Breast epithelium (tissue), 4 donors: ENCODE measurements at regions of chr2 and their contacts with region 1.

Region 1: DNA sequence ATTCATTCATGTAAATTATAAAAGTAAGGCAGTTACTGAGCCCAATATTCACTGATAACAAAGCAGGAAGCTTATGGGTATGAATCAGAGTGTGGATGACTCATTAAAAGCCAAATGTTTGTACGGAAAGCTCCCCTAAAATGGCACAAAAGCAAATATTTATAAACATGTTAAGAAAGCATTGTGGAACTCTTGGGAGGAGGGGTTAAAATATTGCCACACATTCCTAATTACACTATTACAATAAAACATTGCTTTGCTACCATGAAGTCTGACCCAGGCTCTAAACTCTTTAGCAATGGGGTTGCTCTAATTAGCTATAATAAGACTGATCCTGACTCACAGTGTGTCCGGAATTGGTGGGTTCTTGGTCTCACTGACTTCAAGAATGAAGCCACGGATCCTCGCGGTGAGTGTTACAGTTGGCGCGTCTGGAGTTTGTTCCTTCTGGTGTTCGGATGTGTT is 110.9 kb downstream of the NAB1 start:
- DNase-seq: no peak
- H3K4me3 ChIP-seq: no peak overlapping the region
- H3K27ac ChIP-seq: no peak overlapping the region
- H3K4me1 ChIP-seq: no peaks in the 10 kb centered on the region
- H3K27me3 ChIP-seq: no peaks in the 10 kb centered on the region
- CTCF ChIP-seq: no peak
- POLR2A ChIP-seq: no peak

Region 2: GRCh38 chr2:190511104-190511503 is 248.7 kb before region 1 on chr2:
- intact Hi-C with region 1: loop called (anchors 5 kb)
- DNase-seq: no peak
- H3K4me3 ChIP-seq: no peak overlapping the region
- H3K27ac ChIP-seq: no peak overlapping the region
- H3K4me1 ChIP-seq: peaks cover 0 to 11% of the 10 kb centered on the region in 2 donors
- H3K27me3 ChIP-seq: no peaks in the 10 kb centered on the region
- CTCF ChIP-seq: peak in 2 of 3 donors; percentile 43 to 55
- POLR2A ChIP-seq: no peak

Region 3: GRCh38 chr2:191666732-191667131 is 907.0 kb after region 1 on chr2:
- intact Hi-C with region 1: loop called (anchors 5 kb)
- DNase-seq: no peak
- H3K4me3 ChIP-seq: no peak overlapping the region
- H3K27ac ChIP-seq: no peak overlapping the region
- H3K4me1 ChIP-seq: no peaks in the 10 kb centered on the region
- H3K27me3 ChIP-seq: no peaks in the 10 kb centered on the region
- CTCF ChIP-seq: no peak
- POLR2A ChIP-seq: no peak